B cell (primary cell): ENCODE measurements at regions of chr19 and their contacts with region 1.

Region 1: DNA sequence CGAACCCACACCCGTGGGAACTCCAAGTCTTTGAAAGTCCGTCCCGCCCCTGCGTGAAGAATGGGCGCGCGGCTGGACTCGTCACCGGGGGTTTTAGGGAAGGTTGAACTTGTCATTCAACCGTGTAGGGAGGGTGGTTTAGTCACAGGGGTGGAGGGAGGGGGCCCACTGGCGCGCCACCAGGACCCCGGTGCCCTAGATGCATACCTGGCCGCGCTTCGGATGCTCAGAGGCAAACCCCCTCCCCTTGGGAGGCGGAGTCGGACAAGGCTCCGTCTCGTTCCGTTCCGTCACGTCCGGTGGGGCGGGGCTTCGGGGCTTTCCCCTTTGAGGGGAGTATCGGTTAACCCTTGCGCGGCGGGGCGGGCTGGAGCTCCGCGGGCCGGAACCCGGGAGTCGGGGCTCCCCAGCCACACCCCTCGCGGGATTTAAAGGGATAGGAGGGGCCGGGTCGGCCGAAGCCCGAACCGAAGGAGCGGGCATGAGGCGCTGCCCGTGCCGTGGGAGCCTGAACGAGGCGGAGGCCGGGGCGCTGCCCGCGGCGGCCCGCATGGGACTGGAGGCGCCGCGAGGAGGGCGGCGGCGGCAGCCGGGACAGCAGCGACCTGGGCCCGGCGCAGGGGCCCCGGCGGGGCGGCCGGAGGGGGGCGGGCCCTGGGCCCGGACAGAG is at the starts of genes COQ8B and ITPKC:
- DNase-seq: peak; percentile 98
- ATAC-seq: peak; percentile 75
- H3K4me3 ChIP-seq: peak within 1 kb of the TSS; percentile 79 to 90 (median 83)
- H3K4me3 Mint-ChIP-seq: peak within 1 kb of the TSS; percentile 88
- H3K27ac ChIP-seq: peak within 1 kb of the TSS; percentile 87 to 90
- H3K27ac Mint-ChIP-seq: peak within 1 kb of the TSS; percentile 97
- H3K4me1 ChIP-seq: peaks cover 47 to 64% of the 10 kb centered on the region in 2 donors
- H3K4me1 Mint-ChIP-seq: peaks cover 63% of the 10 kb centered on the region
- H3K27me3 ChIP-seq: no peaks in the 10 kb centered on the region
- H3K27me3 Mint-ChIP-seq: no peaks in the 10 kb centered on the region
- CTCF ChIP-seq: peak; percentile 22
- total RNA-seq, gene COQ8B: 55.4 and 58.9 TPM in 2 replicates
- total RNA-seq, gene ITPKC: 13.1 and 16.0 TPM in 2 replicates

Region 2: DNA sequence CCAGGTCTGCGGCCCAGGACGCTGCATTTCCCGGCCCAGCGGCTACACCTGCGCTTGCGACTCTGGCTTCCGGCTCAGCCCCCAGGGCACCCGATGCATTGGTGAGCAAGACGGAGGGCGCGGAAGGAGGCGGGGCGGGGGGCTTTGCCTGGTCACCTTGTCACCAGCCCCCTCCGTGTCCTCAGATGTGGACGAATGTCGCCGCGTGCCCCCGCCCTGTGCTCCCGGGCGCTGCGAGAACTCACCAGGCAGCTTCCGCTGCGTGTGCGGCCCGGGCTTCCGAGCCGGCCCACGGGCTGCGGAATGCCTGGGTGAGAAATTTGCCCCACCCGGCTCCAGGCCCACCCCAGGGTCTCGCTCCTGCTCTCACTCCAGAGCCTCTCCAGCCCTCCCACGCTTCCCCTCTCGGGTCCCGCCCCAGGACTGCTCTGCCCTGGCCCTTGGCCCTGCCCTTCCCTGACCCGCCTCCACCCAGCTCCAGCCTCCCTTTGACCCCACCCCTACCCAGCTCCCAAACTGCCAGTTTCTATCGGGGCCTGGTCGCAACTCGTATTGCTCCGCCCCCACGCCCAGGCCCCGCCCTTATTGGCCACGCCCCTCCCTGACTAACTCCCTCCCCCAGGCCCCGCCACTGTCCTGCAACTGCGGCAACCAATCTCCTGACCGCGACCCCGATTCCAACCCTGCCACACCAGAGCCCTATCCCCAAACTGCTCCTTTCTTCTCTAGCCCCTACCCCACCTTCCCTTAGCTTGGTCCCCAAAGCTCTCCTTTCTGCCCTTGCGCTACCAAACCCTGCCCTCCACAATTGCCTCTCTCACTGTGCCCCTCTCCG is 107.0 kb before region 1 on chr19:
- CTCF ChIA-PET with region 1: no interaction called
- POLR2A ChIA-PET with region 1: no interaction called
- intact Hi-C with region 1: loop called (anchors 10 kb)
- DNase-seq: peak; percentile 90
- ATAC-seq: peak; percentile 57
- H3K4me3 ChIP-seq: peak overlapping the region in 4 of 5 experiments; percentile 49 to 72 (median 62)
- H3K4me3 Mint-ChIP-seq: peak overlapping the region; percentile 92
- H3K27ac ChIP-seq: peak overlapping the region; percentile 83 to 93
- H3K27ac Mint-ChIP-seq: peak overlapping the region; percentile 98
- H3K4me1 ChIP-seq: peaks cover 38 to 58% of the 10 kb centered on the region in 2 donors
- H3K4me1 Mint-ChIP-seq: peaks cover 56% of the 10 kb centered on the region
- H3K27me3 ChIP-seq: no peaks in the 10 kb centered on the region
- H3K27me3 Mint-ChIP-seq: no peaks in the 10 kb centered on the region
- CTCF ChIP-seq: no peak

Region 3: GRCh38 chr19:40690693-40691420 is 25.9 kb before region 1 on chr19:
- CTCF ChIA-PET with region 1: interaction called, 3 read pairs
- POLR2A ChIA-PET with region 1: interaction called, 4 read pairs
- intact Hi-C with region 1: loop called (anchors 1 kb)
- DNase-seq: peak; percentile 93
- ATAC-seq: peak; percentile 74
- H3K4me3 ChIP-seq: peak overlapping the region; percentile 26 to 87 (median 62)
- H3K4me3 Mint-ChIP-seq: peak overlapping the region; percentile 97
- H3K27ac ChIP-seq: peak overlapping the region in 1 of 2 donors; percentile 11
- H3K27ac Mint-ChIP-seq: peak overlapping the region; percentile 88
- H3K4me1 ChIP-seq: peaks cover 44 to 51% of the 10 kb centered on the region in 2 donors
- H3K4me1 Mint-ChIP-seq: peaks cover 13% of the 10 kb centered on the region
- H3K27me3 ChIP-seq: no peaks in the 10 kb centered on the region
- H3K27me3 Mint-ChIP-seq: no peaks in the 10 kb centered on the region
- CTCF ChIP-seq: no peak

Region 4: GRCh38 chr19:40798223-40798996 is 81.6 kb after region 1 on chr19:
- CTCF ChIA-PET with region 1: interaction called, 7 read pairs
- POLR2A ChIA-PET with region 1: interaction called, 4 read pairs
- intact Hi-C with region 1: loop called (anchors 1 kb)
- DNase-seq: peak; percentile 100
- ATAC-seq: peak; percentile 83
- H3K4me3 ChIP-seq: peak overlapping the region; percentile 59 to 84 (median 67)
- H3K4me3 Mint-ChIP-seq: peak overlapping the region; percentile 90
- H3K27ac ChIP-seq: peak overlapping the region; percentile 85 to 90
- H3K27ac Mint-ChIP-seq: peak overlapping the region; percentile 98
- H3K4me1 ChIP-seq: peaks cover 49% of the 10 kb centered on the region in 2 donors
- H3K4me1 Mint-ChIP-seq: peaks cover 53% of the 10 kb centered on the region
- H3K27me3 ChIP-seq: no peaks in the 10 kb centered on the region
- H3K27me3 Mint-ChIP-seq: no peaks in the 10 kb centered on the region
- CTCF ChIP-seq: peak; percentile 56

Region 5: DNA sequence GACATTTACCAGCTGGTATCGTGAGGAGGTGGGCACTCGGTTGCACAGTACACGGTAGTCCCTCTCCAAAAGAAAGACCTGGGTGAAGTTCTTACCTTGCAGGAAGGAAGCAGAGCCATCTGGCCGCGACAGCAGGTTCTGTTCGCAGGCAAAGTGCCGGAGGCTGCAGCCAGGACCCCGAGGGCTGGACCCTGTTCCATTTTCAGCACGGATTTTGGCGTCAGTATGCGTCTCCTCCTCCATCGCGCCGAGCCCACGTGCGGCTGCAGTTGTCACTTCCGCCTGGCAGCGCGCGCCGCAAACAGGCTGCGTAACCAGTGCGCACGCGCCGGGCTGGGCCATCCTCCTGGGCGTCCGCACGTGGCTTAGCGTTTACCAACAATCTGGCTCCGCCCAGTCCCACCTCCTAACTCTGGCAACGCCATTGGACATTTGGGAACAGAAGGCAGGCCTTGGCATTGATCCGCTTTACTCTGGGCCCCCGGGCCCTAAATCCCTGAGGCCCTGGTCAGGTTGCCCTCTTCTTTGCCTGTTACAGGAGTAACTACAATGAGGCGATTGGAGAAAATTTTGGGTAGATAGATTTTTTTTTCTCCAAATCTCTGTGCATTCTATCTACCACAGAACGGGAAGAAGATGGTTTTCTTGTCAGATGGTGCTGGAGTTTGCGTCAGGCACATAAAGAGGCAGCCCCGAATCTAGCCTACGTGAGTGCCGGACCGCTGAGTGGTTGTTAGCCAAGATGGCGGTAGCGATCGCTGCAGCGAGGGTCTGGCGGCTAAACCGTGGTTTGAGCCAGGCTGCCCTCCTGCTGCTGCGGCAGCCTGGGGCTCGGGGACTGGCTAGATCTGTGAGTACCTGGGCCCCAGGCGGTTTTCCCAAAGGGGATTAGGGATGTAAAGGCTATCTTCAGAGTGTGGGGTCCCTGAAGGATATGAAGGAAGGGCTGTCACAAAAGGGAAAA is 680.6 kb after region 1 on chr19 and contains the starts of genes BCKDHA and EXOSC5:
- CTCF ChIA-PET with region 1: no interaction called
- POLR2A ChIA-PET with region 1: no interaction called
- intact Hi-C with region 1: loop called (anchors 5 kb)
- DNase-seq: peak; percentile 100
- ATAC-seq: peak; percentile 98
- H3K4me3 ChIP-seq: peak within 1 kb of the TSS; percentile 84 to 100 (median 90)
- H3K4me3 Mint-ChIP-seq: peak within 1 kb of the TSS; percentile 96
- H3K27ac ChIP-seq: peak within 1 kb of the TSS; percentile 94 to 96
- H3K27ac Mint-ChIP-seq: peak within 1 kb of the TSS; percentile 99
- H3K4me1 ChIP-seq: peaks cover 27 to 28% of the 10 kb centered on the region in 2 donors
- H3K4me1 Mint-ChIP-seq: peaks cover 45% of the 10 kb centered on the region
- H3K27me3 ChIP-seq: no peaks in the 10 kb centered on the region
- H3K27me3 Mint-ChIP-seq: no peaks in the 10 kb centered on the region
- CTCF ChIP-seq: no peak
- total RNA-seq, gene BCKDHA: 20.6 and 25.2 TPM in 2 replicates
- total RNA-seq, gene EXOSC5: 14.1 and 16.1 TPM in 2 replicates